IMR-90 (cell line): ENCODE measurements at regions of chr14 and their contacts with region 1.

Region 1: DNA sequence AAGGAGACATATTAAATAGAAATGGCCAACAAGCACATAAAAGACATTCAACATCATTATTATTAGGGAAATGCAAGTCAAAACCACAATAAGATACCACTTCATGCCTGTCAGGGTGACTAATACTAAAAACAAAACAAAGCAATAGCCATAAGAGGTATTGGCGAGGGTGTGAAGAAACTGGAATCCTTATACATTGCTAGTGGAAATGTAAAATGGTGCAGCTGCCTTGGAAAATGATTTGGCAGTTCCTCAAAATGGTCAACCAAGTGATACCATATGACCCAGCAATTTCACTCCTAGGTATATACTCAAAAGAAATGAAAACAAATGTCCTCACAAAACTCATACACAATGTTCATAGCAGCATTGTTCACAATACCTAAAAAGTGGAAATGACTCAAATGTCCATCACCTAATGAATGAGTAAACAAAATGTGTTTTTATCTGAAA is 27.0 kb downstream of the GPR135 start:
- DNase-seq: peak; percentile 78
- ATAC-seq: peak; percentile 64
- H3K4me3 ChIP-seq: no peak overlapping the region
- H3K27ac ChIP-seq: no peak overlapping the region
- H3K4me1 ChIP-seq: peaks cover 10% of the 10 kb centered on the region
- H3K27me3 ChIP-seq: no peaks in the 10 kb centered on the region
- CTCF ChIP-seq: no peak
- POLR2A ChIP-seq: no peak
- RAD21 ChIP-seq: no peak

Region 2: DNA sequence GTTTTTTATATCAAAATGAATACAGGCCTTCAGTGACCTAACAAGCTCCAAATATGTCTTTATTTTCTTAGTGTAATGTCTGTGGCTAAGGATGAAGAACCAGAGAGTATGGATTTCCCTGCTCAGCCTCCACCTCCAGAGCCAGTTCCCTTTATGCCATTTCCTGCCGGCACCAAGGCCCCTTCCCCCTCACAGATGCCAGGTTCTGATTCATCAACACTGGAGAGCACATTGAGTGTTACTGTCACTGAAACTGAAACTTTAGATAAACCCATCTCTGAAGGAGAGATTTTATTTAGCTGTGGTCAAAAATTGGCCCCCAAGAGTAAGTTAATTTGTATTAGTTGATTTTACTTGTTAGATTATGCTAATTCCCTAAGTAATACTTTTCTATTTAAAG is 949.7 kb before region 1 on chr14:
- CTCF ChIA-PET with region 1: no interaction called
- POLR2A ChIA-PET with region 1: no interaction called
- dilution Hi-C with region 1: no loop called
- in situ Hi-C with region 1: no loop called
- intact Hi-C with region 1: loop called (anchors 10 kb)
- DNase-seq: peak; percentile 50
- ATAC-seq: peak; percentile 65; the same call in 1 of the 2 replicates
- H3K4me3 ChIP-seq: no peak overlapping the region
- H3K27ac ChIP-seq: peak overlapping the region; percentile 40; the same call in 1 of the 2 replicates
- H3K4me1 ChIP-seq: peaks cover 2% of the 10 kb centered on the region; the same call in 1 of the 2 replicates
- H3K27me3 ChIP-seq: no peaks in the 10 kb centered on the region
- CTCF ChIP-seq: no peak
- POLR2A ChIP-seq: no peak
- RAD21 ChIP-seq: no peak

Region 3: GRCh38 chr14:59126710-59127432 is 311.4 kb before region 1 on chr14:
- CTCF ChIA-PET with region 1: interaction called, 6 read pairs
- POLR2A ChIA-PET with region 1: no interaction called
- dilution Hi-C with region 1: no loop called
- in situ Hi-C with region 1: loop called (anchors 5 kb)
- intact Hi-C with region 1: loop called (anchors 1 kb)
- DNase-seq: peak; percentile 64
- ATAC-seq: peak; percentile 90
- H3K4me3 ChIP-seq: no peak overlapping the region
- H3K27ac ChIP-seq: no peak overlapping the region
- H3K4me1 ChIP-seq: no peaks in the 10 kb centered on the region; the same call in 1 of the 2 replicates
- H3K27me3 ChIP-seq: peaks cover 2% of the 10 kb centered on the region; the same call in 1 of the 2 replicates
- CTCF ChIP-seq: peak; percentile 81
- POLR2A ChIP-seq: no peak
- RAD21 ChIP-seq: peak; percentile 94

Region 4: DNA sequence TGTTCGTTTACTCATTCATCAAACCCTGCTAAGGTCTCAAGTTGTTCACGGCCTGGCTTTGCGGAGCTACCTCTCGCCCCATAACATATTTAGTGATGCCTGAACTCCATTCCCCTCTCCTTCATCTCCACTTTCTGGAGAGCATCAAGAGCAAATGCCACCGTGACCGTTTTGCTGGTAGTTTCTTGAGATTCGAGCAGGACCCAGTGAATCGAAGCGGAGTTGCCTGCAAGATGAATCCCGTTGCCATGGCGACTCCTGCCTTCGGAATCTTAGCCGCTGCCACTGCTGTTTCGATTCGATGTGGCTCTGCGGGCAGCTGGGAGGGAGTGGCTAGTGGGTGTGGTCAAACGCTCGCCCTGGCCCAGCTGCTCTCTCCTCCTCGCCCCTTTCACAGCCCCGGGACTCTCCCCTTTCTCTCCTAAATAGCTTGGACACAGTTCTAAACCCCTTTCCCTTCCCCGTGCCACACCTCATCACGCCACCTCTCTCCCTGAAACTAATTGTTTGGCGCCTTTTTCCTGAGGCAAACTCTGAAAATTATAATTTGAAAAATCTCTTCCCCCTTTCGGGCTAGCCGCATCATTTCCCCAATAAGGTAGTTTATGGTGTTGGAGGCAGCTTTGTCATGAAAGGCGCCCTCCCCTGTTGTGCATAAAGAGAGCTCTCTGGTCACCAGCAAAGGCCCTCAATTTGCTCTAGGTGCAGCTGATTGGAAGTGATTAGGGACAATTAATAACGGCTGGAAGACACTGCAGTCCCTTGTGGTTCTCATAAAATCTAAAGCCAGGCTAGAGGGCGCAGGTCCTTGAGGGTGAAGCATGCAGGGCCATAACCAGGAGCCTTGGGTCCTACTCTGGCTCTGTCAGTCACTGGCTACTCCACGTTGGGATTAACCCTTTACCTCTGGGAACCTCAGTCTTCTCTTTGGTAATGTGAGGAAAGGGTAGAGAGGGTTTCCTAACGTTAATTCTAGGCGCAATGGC is 248.1 kb before region 1 on chr14:
- CTCF ChIA-PET with region 1: no interaction called
- POLR2A ChIA-PET with region 1: no interaction called
- dilution Hi-C with region 1: no loop called
- in situ Hi-C with region 1: no loop called
- intact Hi-C with region 1: loop called (anchors 2 kb)
- DNase-seq: peak; percentile 91
- ATAC-seq: peak; percentile 57
- H3K4me3 ChIP-seq: peak overlapping the region; percentile 93
- H3K27ac ChIP-seq: peak overlapping the region; percentile 71
- H3K4me1 ChIP-seq: peaks cover 4% of the 10 kb centered on the region
- H3K27me3 ChIP-seq: peaks cover 2% of the 10 kb centered on the region
- CTCF ChIP-seq: peak; percentile 18; the same call in 1 of the 2 replicates
- POLR2A ChIP-seq: 0 out of 2 replicates have a peak, but pooled peaks have one; percentile 38
- RAD21 ChIP-seq: peak; percentile 19

Region 5: DNA sequence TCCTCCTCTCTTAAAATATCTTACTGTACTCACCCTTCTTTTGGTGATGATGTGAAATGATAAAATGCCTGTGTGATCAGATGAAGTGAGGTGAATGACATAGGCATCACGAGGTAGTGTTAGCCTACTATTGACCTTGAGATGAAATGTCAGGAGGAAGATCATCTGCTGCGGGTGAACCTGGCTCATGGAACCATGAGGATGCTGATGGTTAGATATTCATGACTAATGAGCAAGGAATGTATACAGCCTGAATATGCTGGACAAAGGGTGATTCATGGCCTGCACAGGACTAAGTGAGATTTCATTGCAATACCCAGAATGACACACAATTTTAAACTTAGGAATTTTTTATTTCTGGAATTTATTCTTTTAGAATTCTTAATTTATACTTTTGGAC is 160.1 kb before region 1 on chr14:
- CTCF ChIA-PET with region 1: no interaction called
- POLR2A ChIA-PET with region 1: no interaction called
- dilution Hi-C with region 1: no loop called
- in situ Hi-C with region 1: no loop called
- intact Hi-C with region 1: loop called (anchors 2 kb)
- DNase-seq: peak; percentile 94
- ATAC-seq: peak; percentile 75
- H3K4me3 ChIP-seq: no peak overlapping the region
- H3K27ac ChIP-seq: no peak overlapping the region
- H3K4me1 ChIP-seq: peaks cover 25% of the 10 kb centered on the region
- H3K27me3 ChIP-seq: no peaks in the 10 kb centered on the region
- CTCF ChIP-seq: no peak
- POLR2A ChIP-seq: no peak
- RAD21 ChIP-seq: no peak